ENCODE measurements at regions of chr22 and their contacts with region 1.

Region 1: GRCh38 chr22:44080936-44081861 is 57.1 kb downstream of the PARVB start:
- DNase-seq: peak; percentile 77
- H3K4me3 Mint-ChIP-seq: no peak overlapping the region
- H3K27ac Mint-ChIP-seq: no peak overlapping the region
- H3K4me1 Mint-ChIP-seq: no peaks in the 10 kb centered on the region
- H3K27me3 Mint-ChIP-seq: no peaks in the 10 kb centered on the region

Region 2: DNA sequence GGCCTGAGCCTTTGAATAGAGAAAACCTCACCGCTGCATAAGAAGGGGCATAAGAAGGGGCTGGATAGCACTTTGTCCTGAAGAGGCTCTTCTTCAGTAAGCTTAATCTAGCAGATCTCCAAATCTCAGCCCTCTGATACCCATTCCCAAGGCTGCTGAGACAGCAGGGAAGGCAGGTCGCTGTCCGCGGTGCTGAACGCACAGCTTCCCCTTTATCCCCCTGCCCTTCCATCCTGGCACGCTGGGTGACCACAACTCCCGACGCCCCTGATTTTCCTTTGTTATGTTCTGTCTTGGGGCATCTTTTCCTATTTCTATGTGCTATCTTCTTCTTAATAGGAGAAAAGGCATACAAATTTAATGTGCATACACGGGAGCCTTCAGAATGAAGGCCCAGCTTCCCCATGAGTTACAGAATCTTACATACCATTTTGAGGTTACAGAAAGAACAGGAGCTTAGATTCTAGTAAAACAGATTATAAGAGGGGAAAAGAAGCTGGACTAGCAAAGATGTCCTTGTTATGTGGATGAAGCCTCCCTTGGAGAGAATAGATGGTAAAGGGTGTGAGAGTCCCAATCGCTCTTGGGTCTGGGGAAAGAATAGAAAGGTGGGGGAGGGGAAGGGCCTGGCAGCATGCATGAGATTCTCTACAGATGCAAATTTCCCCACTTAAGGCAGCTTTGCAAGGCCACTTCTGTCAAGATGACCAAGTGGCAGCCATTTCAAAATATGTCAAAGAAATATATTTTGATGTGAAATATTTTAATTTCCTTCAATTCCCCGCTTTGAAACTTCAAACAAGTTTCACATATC is 213.2 kb before region 1 on chr22:
- CTCF ChIA-PET with region 1: no interaction called
- POLR2A ChIA-PET with region 1: no interaction called
- intact Hi-C with region 1: no loop called
- DNase-seq: peak; percentile 35
- H3K4me3 Mint-ChIP-seq: no peak overlapping the region
- H3K27ac Mint-ChIP-seq: no peak overlapping the region
- H3K4me1 Mint-ChIP-seq: no peaks in the 10 kb centered on the region
- H3K27me3 Mint-ChIP-seq: peaks cover 30% of the 10 kb centered on the region

Region 3: DNA sequence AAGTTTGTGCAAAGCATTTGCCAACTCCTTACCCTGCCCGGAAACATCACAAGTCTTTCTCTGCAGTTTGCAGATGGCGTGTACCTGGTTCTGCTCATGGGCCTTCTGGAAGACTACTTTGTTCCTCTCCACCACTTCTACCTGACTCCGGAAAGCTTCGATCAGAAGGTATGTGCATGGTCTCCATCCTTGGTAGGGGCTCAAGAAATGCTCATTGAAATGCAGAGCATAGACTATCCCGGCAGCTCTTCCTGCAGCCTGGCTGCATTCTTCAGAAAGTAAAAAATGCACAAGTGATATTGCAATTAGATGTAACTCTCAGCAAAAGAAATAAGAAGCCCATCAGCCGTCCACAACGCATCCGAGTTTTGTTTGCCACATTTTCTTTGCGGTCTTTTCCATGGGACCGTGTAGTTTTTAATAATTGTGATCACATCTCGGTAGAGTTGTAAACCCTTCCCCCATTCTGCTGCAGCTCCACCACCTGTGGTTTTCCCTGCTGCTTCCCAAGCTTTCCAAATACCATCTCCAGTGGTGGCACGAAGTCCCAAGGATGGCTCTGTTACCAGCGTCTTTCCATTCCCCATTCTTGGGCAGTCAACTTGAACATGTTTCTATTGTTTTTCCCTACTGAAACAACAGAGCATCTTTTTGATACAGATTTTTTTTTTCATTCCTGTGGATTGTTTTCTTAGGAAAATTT is 76.9 kb after region 1 on chr22:
- CTCF ChIA-PET with region 1: interaction called, 10 read pairs
- POLR2A ChIA-PET with region 1: no interaction called
- intact Hi-C with region 1: no loop called
- DNase-seq: no peak
- H3K4me3 Mint-ChIP-seq: no peak overlapping the region
- H3K27ac Mint-ChIP-seq: no peak overlapping the region
- H3K4me1 Mint-ChIP-seq: no peaks in the 10 kb centered on the region
- H3K27me3 Mint-ChIP-seq: no peaks in the 10 kb centered on the region

Measured in activated CD4-positive, alpha-beta memory T cell treated with anti-CD3 and anti-CD28 coated beads for 36 hours (primary cell).